GM13976 (cell line): ENCODE measurements at regions of chr5 and their contacts with region 1.

Region 1: GRCh38 chr5:77645158-77645994 is 6.9 kb upstream of the OTP start:
- DNase-seq: peak; percentile 90
- CTCF ChIP-seq: peak; percentile 75

Region 2: DNA sequence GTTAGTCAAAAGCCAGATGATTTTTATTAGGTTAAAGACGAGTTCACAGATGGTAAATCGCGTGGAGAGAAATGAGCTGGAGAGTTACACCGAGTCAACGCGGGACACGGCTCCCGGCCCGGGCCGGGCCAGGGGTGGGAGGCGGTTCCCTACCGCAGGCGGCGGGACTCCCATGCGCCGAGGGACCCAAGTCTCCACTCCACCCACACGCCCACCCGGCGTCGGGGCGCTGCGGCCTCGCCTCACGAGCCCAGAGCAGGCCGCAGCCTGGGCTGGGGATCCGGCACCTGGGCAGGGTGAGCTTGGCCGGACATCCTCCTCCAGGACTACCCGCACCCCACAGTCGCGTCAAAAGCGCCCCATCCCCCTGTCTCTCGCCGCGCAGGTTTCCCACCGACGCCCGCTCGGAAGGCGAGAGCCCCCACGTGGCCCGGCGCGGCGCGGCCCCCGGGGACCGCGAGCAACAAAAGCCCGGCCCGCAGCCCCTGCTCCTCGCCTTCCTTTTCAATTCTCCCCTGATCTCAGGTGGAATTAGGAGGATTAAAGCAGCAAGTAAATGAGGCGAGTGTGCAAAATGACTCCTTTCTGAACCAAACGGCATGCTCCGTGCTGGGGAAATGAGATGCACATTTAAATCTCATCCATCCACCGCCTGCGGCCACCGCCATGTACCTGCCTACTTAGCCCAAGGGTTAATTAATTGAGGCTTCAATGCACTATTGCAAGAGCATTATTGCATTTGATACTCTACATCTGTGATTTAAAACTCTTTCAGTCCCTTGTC is 327.3 kb after region 1 on chr5:
- in situ Hi-C with region 1: loop called (anchors 10 kb)
- DNase-seq: peak; percentile 76
- CTCF ChIP-seq: peak; percentile 46